ENCODE measurements at regions of chr14 and their contacts with region 1.

Region 1: DNA sequence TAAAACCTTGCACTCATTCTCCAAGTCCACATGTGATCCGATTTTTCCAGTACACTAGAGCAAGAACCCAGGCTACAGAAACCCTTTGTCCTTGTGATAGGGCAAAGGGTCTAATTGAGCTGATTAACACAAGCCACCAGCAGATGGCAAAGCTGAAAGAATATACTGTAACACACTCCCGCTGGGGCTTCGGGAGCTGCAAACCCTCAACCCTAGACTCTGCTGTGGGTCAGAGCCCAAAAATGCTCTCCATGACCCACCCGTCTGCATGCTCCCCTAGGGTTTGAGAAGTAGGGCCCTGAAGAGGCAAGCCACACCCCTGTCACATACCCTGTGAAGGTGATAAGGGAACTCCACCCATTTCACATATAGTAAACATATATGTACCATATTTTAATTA is 33.6 kb upstream of the PCNX1 start:
- DNase-seq: peak; percentile 38
- ATAC-seq: peak; percentile 84
- H3K4me3 ChIP-seq: no peak overlapping the region
- H3K27ac ChIP-seq: no peak overlapping the region
- H3K4me1 ChIP-seq: peaks cover 11% of the 10 kb centered on the region
- H3K27me3 ChIP-seq: peaks cover under 1 to 1% of the 10 kb centered on the region in 2 experiments; a peak in 3 of 5 replicates
- CTCF ChIP-seq: peak; percentile 49
- EP300 ChIP-seq: no peak
- POLR2A ChIP-seq: no peak
- RAD21 ChIP-seq: no peak

Region 2: GRCh38 chr14:70894868-70895267 is 21.2 kb after region 1 on chr14:
- CTCF ChIA-PET with region 1: no interaction called
- POLR2A ChIA-PET with region 1: no interaction called
- in situ Hi-C with region 1: no loop called
- intact Hi-C with region 1: loop called (anchors 1 kb)
- DNase-seq: peak; percentile 96
- ATAC-seq: peak; percentile 99
- H3K4me3 ChIP-seq: peak overlapping the region in 1 of 3 experiments; percentile 14; a peak in 1 of 6 replicates
- H3K27ac ChIP-seq: peak overlapping the region; percentile 44
- H3K4me1 ChIP-seq: peaks cover 42% of the 10 kb centered on the region
- H3K27me3 ChIP-seq: peaks cover 0 to 3% of the 10 kb centered on the region in 2 experiments; a peak in 2 of 5 replicates
- CTCF ChIP-seq: 0 out of 2 replicates have a peak, but pooled peaks have one; percentile 19
- EP300 ChIP-seq: peak in 1 of 2 experiments; percentile 54; a peak in 1 of 4 replicates
- POLR2A ChIP-seq: no peak
- RAD21 ChIP-seq: no peak